ENCODE measurements at regions of chr16 and their contacts with region 1.

Region 1: DNA sequence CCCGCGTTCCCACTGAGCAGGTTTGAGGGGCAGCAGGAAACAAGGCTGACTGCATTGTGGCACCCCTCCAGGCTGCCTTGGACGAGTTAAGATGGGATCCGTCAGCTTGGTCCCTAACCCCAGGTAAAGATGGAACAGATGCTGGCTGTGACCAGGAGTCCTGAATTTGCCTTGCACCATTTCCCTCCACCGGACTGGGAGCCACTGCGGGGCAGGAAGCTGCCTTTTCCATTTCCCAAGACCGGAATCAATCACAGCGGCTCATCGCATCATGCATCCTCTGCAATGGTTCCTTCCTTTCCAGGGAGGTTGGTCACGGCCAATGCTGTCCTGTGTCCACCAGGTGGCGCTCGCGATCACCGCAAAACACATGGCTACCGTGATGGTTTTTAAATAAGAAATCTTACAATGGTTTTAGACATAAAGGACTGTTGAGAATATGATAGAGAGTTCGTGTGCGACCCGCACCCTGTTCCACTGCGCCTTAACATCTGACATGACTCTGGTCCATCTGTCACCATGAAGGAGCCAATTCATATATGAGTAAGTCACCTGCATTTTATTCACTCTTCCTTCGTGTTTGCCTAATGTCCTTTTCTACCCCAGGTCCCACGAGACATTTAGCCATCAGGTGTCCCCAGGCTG is 6.8 kb upstream of the MEAK7 start:
- DNase-seq: peak; percentile 67 to 96 (median 82)
- ATAC-seq: peak; percentile 87 to 92 (median 89)
- H3K4me3 ChIP-seq: no peak overlapping the region
- H3K27ac ChIP-seq: no peak overlapping the region
- H3K4me1 ChIP-seq: peaks cover 0 to 4% (median 0%) of the 10 kb centered on the region in 3 donors
- H3K27me3 ChIP-seq: no peaks in the 10 kb centered on the region
- CTCF ChIP-seq: peak; percentile 89 to 99 (median 98)

Region 2: DNA sequence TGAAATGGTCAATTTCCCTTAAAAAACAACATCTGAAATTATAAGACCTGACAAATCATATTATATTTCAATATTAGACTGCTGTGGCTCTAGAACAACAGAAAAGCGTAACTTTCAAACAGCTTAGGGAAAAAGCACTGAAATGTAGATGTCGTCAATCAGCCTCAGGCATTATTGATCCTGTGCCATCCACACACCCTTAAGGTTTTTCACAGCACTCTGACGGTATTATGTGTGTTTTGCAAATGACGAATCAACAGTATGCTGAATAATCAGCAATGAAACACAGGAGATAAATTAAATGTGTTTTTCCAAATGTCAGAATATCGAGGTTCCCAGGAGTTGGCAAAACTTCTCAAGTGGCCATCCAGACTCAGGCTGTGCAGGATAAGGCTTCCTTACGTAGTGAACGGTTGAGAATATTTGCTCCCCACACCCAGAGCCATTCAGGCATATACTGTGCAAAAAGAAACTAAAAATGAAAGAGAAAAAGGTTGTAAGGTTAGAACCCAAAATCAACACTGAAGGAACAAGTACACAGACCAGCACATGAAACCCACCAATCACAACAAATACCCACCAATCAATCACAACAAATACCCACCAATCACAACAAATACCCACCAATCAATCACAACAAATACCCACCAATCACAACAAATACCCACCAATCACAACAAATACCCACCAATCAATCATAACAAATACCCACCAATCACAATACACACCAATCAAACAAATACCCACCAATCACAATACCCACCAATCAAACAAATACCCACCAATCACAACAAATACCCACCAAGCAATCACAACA is 386.8 kb before region 1 on chr16:
- intact Hi-C with region 1: no loop called
- DNase-seq: no peak
- ATAC-seq: no peak
- H3K4me3 ChIP-seq: no peak overlapping the region
- H3K27ac ChIP-seq: no peak overlapping the region
- H3K4me1 ChIP-seq: no peaks in the 10 kb centered on the region
- H3K27me3 ChIP-seq: no peaks in the 10 kb centered on the region
- CTCF ChIP-seq: no peak

Region 3: GRCh38 chr16:84617791-84618580 is 106.7 kb after region 1 on chr16 and contains the start of gene COTL1:
- intact Hi-C with region 1: loop called in 2 of 3 experiments (anchors 5 kb)
- DNase-seq: peak; percentile 92 to 97 (median 94)
- ATAC-seq: peak; percentile 90 to 92 (median 90)
- H3K4me3 ChIP-seq: peak within 1 kb of the TSS; percentile 42 to 89 (median 72)
- H3K27ac ChIP-seq: peak within 1 kb of the TSS in 2 of 4 donors; percentile 50 to 51
- H3K4me1 ChIP-seq: peaks cover 0 to 8% (median 0%) of the 10 kb centered on the region in 3 donors
- H3K27me3 ChIP-seq: no peaks in the 10 kb centered on the region
- CTCF ChIP-seq: no peak
- total RNA-seq, gene COTL1: 6.8 to 44.3 (median 19.1) TPM

Measured in pancreas (tissue), 10 donors.